ENCODE measurements at regions of chr4 and their contacts with region 1.

Region 1: GRCh38 chr4:75490155-75490554 is 24.0 kb downstream of the RCHY1 start:
- DNase-seq: no peak
- ATAC-seq: no peak
- H3K4me3 ChIP-seq: no peak overlapping the region
- H3K27ac ChIP-seq: no peak overlapping the region
- H3K4me1 ChIP-seq: no peaks in the 10 kb centered on the region
- H3K27me3 ChIP-seq: no peaks in the 10 kb centered on the region

Region 2: DNA sequence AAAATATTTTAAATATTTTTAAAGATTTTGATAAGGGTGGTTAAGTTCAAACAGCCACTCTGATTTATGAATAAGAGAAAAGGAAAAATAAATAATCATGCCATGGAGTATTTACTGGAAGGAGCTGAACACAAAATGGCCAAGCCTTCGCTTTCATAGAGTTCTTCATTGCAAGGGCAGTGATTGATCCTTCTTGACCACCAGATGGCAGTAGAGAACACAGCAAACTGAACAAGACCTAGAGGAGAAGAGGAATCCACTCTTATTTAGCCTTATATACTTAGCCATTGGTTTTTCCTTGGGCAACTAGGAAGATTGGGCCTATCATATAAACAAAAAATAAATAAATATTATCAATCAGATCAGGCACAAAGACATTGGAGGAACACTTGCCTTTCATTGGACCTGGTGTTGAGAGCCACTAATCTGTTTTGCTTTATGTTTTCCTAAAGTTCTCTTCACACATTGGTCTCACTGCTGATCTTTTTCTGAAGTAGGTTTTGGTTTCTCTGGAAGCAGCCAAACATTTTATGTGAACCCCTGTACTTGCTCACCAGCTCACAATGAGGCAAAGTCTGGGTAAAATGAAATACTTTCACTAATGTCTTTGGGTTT is 615.3 kb before region 1 on chr4:
- intact Hi-C with region 1: loop called in 1 of 2 experiments (anchors 5 kb)
- DNase-seq: no peak
- ATAC-seq: peak; percentile 95
- H3K4me3 ChIP-seq: no peak overlapping the region
- H3K27ac ChIP-seq: peak overlapping the region in 1 of 2 donors; percentile 39
- H3K4me1 ChIP-seq: peaks cover 0 to 10% of the 10 kb centered on the region in 2 donors
- H3K27me3 ChIP-seq: no peaks in the 10 kb centered on the region

Measured in aorta (tissue), 5 donors.